Thyroid gland (tissue), 4 donors: ENCODE measurements at regions of chr2 and their contacts with region 1.

Region 1: GRCh38 chr2:46893269-46893945 is 22.2 kb downstream of the MCFD2 start:
- DNase-seq: no peak
- H3K4me3 ChIP-seq: no peak overlapping the region
- H3K27ac ChIP-seq: no peak overlapping the region
- H3K4me1 ChIP-seq: no peaks in the 10 kb centered on the region
- H3K27me3 ChIP-seq: no peaks in the 10 kb centered on the region
- CTCF ChIP-seq: no peak
- POLR2A ChIP-seq: no peak

Region 2: DNA sequence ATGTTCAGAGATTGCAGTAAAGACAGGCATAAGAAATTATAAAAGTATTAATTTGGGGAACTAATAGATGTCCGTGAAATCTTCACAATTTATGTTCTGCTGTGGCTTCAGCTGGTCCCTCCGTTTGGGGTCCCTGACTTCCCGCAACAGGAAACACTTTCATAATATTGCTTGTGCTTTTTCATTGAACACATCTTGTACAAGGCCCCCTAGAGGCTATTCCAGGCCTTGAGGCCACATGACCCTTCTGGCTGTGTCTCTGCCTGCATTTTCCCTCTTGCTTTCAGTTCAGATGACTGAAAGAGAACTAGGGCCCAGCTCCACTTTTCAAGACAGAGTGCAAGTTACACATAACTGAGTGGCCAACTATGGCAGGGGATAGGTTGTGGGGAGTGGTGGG is 249.9 kb before region 1 on chr2:
- intact Hi-C with region 1: loop called (anchors 5 kb)
- DNase-seq: no peak
- H3K4me3 ChIP-seq: no peak overlapping the region
- H3K27ac ChIP-seq: no peak overlapping the region
- H3K4me1 ChIP-seq: peaks cover 0 to 9% of the 10 kb centered on the region in 2 donors
- H3K27me3 ChIP-seq: no peaks in the 10 kb centered on the region
- CTCF ChIP-seq: no peak
- POLR2A ChIP-seq: no peak

Region 3: DNA sequence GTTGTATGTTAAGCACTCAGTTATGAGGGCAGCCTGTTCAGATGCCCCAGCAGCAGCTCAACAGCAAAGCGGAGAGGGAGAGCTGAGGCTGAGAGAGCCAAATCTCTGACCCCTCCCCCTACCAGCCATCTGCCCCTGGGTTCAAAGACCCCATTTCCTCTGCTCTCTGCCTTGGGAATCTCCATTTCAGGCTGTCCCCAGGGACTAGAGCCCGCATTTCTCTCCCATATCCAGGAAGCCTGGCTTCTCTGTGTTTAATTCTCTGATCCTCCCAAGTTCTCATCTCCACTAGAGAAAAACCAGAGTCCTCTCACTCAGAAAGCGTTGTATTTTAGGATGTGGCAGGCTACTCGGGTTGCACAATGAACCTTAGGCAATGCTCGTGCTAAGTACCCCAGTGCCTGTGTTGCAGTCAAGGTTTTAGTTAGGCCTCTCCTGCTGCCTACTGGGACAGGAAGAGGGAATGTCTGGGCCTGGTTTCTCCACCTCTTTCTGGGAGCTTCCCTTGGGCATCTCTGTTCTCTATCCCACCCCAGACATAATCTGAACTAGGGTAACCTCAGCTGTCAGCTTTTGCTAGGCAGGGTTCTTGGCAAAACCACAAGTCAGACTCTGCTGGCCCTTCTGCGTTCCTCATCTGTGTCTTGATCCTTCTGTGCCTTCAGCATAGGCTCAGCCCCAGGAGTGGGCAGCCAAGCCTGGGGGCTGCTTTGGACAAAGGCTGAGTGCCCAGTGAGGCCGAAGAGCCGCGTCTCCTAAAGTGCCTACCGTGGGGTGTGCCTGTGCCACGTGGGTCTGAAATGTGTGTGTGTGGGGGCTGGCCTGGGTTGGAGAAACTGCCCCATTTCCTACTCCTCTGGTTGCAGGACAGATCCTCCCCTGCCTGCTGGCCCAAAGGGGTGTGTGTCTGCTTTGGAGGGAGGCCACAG is 164.9 kb after region 1 on chr2:
- intact Hi-C with region 1: no loop called
- DNase-seq: peak in 1 of 2 donors; percentile 37
- H3K4me3 ChIP-seq: no peak overlapping the region
- H3K27ac ChIP-seq: peak overlapping the region; percentile 61 to 79 (median 68)
- H3K4me1 ChIP-seq: peaks cover 28 to 39% of the 10 kb centered on the region in 2 donors
- H3K27me3 ChIP-seq: no peaks in the 10 kb centered on the region
- CTCF ChIP-seq: no peak
- POLR2A ChIP-seq: no peak